ENCODE measurements at regions of chr3 and their contacts with region 1.

Region 1: DNA sequence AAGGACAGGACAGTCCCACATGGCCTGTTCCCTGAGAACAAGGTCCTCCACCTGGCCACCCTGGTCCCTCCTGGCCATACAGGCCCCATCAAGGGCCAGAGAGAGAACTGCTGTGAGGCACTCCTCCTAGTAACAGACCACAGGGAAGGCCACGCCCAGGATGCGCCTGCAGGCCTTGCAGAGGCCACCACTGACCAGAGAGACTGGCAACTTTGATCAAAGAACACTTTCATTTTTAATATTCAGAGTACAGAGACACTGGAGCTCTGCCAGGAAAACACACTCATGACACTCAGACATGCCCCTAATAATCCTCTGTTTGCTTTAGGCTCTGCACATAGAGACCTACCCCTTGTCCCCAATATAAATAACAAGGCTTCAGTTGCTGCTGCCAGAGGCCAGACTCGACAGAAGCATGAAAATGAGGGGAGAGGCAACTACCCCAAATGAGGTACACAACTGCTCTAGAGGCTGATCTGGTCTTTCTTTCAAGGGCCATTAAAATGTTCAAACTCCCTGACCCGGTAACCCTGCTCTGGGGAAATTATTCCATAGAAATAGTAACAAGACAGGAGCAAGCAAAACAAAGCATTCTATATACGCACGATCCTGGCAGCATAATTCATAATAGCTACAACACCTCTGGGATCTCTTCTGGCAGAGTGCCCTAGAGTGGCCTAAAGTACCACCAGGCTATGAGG is 44.8 kb downstream of the CCDC12 start:
- DNase-seq: no peak
- H3K4me3 Mint-ChIP-seq: no peak overlapping the region
- H3K27ac Mint-ChIP-seq: peak overlapping the region; percentile 84
- H3K4me1 Mint-ChIP-seq: peaks cover 55% of the 10 kb centered on the region
- H3K27me3 Mint-ChIP-seq: no peaks in the 10 kb centered on the region

Region 2: DNA sequence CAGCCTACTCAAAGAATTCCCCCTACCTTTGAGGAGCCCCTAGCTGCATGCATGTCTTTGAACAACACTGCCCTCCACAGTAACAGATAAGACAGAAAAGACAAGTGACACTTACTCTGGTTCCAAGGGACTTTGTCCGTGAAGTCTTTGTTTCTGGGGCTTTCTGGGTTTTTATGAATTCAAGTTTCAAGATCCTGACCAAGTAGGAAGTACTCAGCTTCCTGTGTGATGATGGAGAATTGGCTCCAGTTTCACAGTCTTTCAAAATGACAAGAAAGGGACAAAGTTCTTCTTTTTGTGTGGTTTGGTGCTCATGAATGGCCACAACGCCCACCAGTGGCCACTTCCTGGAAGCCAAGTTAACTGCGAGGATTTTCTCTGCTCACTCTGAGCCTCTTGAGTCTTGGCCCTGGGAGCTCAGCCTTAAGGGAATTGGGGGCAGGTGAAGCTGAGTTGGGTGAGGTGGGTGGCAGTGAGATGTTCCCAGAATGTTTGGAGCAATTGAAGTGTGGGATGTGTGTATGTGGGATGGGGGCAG is 723.5 kb before region 1 on chr3 and contains the start of gene CCR1:
- intact Hi-C with region 1: no loop called
- DNase-seq: peak; percentile 44
- H3K4me3 Mint-ChIP-seq: no peak within 1 kb of the TSS
- H3K27ac Mint-ChIP-seq: peak within 1 kb of the TSS; percentile 18
- H3K4me1 Mint-ChIP-seq: peaks cover 25% of the 10 kb centered on the region
- H3K27me3 Mint-ChIP-seq: peaks cover 31% of the 10 kb centered on the region
- total RNA-seq, gene CCR1: 0.41 and 0.51 TPM in 2 replicates

Region 3: GRCh38 chr3:46987743-46988401 is 56.1 kb after region 1 on chr3:
- intact Hi-C with region 1: loop called (anchors 5 kb)
- DNase-seq: peak; percentile 89
- H3K4me3 Mint-ChIP-seq: peak overlapping the region; percentile 77
- H3K27ac Mint-ChIP-seq: peak overlapping the region; percentile 94
- H3K4me1 Mint-ChIP-seq: peaks cover 56% of the 10 kb centered on the region
- H3K27me3 Mint-ChIP-seq: no peaks in the 10 kb centered on the region